ENCODE measurements at regions of chr10 and their contacts with region 1.

Region 1: GRCh38 chr10:3785257-3785850 is 345 bp upstream of the KLF6 start:
- DNase-seq: peak; percentile 99 to 100 (median 99)
- H3K4me3 ChIP-seq: peak overlapping the region; percentile 2 to 80 (median 48)
- H3K27ac ChIP-seq: peak overlapping the region; percentile 89 to 100 (median 100)
- H3K4me1 ChIP-seq: peaks cover 21 to 34% of the 10 kb centered on the region in 2 donors
- H3K27me3 ChIP-seq: no peaks in the 10 kb centered on the region
- CTCF ChIP-seq: peak in 1 of 6 experiments; percentile 36
- POLR2A ChIP-seq: peak; percentile 99 to 100

Region 2: DNA sequence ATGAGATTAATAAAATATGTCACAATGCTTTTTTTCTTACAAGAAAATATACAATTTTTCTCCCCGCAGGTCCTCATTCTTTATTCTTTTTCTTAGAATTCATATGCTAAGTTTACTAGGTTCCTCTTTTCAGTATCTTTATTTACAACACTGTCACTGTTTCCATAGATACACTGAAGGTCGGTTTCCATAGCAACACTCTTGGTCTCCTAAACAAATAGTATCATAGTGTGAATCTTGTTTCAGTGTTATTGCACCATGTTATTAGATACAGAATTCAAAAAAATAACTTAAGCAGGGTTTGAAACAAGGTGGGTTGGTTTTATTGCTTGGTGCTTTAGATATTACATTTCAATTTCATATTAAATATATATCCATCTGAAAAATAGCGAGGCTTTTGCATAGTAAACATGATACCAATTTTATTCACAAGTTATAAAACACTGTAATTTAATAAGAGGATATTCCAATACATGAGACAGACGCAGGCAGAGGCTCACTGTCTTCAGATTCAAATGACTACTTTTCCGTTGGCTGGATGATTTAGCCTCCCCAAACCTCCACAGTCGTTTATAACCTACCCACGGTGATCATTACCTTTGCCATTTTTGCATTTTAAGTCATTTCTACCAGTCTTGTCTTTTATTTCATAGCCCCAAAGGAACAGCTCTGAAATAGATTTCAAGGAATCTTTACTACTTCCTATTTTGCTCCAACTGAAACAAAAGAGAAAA is 88.5 kb after region 1 on chr10:
- intact Hi-C with region 1: loop called in 1 of 2 experiments (anchors 10 kb)
- DNase-seq: no peak
- H3K4me3 ChIP-seq: no peak overlapping the region
- H3K27ac ChIP-seq: peak overlapping the region in 1 of 5 donors; percentile 6
- H3K4me1 ChIP-seq: peaks cover 7 to 25% of the 10 kb centered on the region in 2 donors
- H3K27me3 ChIP-seq: no peaks in the 10 kb centered on the region
- CTCF ChIP-seq: no peak
- POLR2A ChIP-seq: no peak

Measured in adrenal gland (tissue), 19 donors.